SK-N-SH (cell line): ENCODE measurements at regions of chr3 and their contacts with region 1.

Region 1: DNA sequence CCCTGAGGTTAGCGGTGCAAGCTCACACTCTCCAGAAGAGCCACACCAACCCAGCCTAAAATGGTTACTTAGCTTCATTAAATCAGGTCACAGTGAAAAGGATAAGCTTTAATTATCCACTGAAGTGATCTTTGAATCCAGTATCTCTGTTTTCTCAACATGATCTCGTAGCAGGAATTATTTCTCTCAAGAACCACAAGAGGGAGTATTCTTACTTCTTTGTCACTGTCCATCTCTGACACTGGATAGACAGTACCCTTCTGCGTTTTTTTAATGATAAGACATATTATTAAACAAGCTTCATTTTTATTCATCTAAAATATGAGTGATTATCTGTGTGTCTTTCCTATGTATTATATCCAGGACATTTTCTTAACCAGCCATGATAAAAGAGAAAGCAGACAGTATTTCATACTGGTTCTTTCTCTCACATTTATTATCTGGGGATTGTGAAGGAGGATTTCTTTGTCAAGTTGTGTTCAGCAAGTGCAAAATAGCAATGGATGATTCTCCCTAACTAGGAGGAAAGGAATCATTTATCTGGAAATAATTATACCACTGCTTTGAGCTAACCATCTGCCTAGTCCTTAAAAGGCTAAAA is 105.4 kb upstream of the CCDC54 start:
- DNase-seq: peak; percentile 36
- H3K4me3 ChIP-seq: no peak overlapping the region
- H3K27ac ChIP-seq: no peak overlapping the region
- H3K4me1 ChIP-seq: no peaks in the 10 kb centered on the region; a peak in 1 of 4 replicates
- H3K27me3 ChIP-seq: no peaks in the 10 kb centered on the region
- CTCF ChIP-seq: peak; percentile 81
- EP300 ChIP-seq: no peak
- RAD21 ChIP-seq: peak; percentile 86

Region 2: GRCh38 chr3:107150675-107151074 is 121.2 kb before region 1 on chr3:
- CTCF ChIA-PET with region 1: no interaction called
- POLR2A ChIA-PET with region 1: no interaction called
- DNase-seq: no peak
- H3K4me3 ChIP-seq: no peak overlapping the region
- H3K27ac ChIP-seq: no peak overlapping the region
- H3K4me1 ChIP-seq: no peaks in the 10 kb centered on the region
- H3K27me3 ChIP-seq: no peaks in the 10 kb centered on the region
- CTCF ChIP-seq: no peak
- EP300 ChIP-seq: no peak
- RAD21 ChIP-seq: no peak

Region 3: GRCh38 chr3:107241224-107241623 is 30.7 kb before region 1 on chr3:
- CTCF ChIA-PET with region 1: interaction called, 53 read pairs
- POLR2A ChIA-PET with region 1: no interaction called
- DNase-seq: peak; percentile 32
- H3K4me3 ChIP-seq: peak overlapping the region; percentile 94 to 99
- H3K27ac ChIP-seq: peak overlapping the region in 1 of 2 experiments; percentile 60; a peak in 1 of 4 replicates
- H3K4me1 ChIP-seq: peaks cover 0 to 6% of the 10 kb centered on the region in 2 experiments; a peak in 2 of 4 replicates
- H3K27me3 ChIP-seq: no peaks in the 10 kb centered on the region
- CTCF ChIP-seq: no peak; the same call in 1 of the 2 replicates
- EP300 ChIP-seq: no peak
- RAD21 ChIP-seq: no peak

Region 4: DNA sequence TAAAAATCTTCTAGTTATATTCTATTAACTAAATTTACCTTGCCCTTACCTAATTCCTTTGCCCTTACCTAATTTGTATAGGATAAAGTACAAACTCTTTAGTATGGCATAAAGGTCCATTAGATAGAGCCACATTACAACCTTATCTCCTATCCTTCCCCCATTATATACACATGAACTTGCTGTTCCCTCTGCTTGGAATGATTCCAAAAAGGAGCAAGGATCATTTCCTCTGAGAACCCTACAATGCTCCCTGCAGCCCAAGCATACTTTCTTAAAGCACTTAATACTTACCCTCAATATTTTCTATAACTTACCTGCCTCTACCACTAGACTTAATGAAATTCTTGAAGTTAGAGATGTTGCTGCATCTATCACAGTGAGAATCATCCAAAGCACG is 13.6 kb before region 1 on chr3:
- CTCF ChIA-PET with region 1: interaction called, 18 read pairs
- POLR2A ChIA-PET with region 1: interaction called, 5 read pairs
- DNase-seq: no peak
- H3K4me3 ChIP-seq: no peak overlapping the region
- H3K27ac ChIP-seq: no peak overlapping the region
- H3K4me1 ChIP-seq: no peaks in the 10 kb centered on the region
- H3K27me3 ChIP-seq: no peaks in the 10 kb centered on the region
- CTCF ChIP-seq: no peak
- EP300 ChIP-seq: no peak
- RAD21 ChIP-seq: no peak

Region 5: GRCh38 chr3:107323723-107324122 is 51.8 kb after region 1 on chr3:
- CTCF ChIA-PET with region 1: no interaction called
- POLR2A ChIA-PET with region 1: no interaction called
- DNase-seq: no peak
- H3K4me3 ChIP-seq: no peak overlapping the region
- H3K27ac ChIP-seq: no peak overlapping the region
- H3K4me1 ChIP-seq: no peaks in the 10 kb centered on the region
- H3K27me3 ChIP-seq: no peaks in the 10 kb centered on the region
- CTCF ChIP-seq: no peak
- EP300 ChIP-seq: no peak
- RAD21 ChIP-seq: no peak

Region 6: GRCh38 chr3:107404727-107405469 is 133.0 kb after region 1 on chr3:
- CTCF ChIA-PET with region 1: interaction called, 16 read pairs
- POLR2A ChIA-PET with region 1: no interaction called
- DNase-seq: no peak
- H3K4me3 ChIP-seq: no peak overlapping the region; a peak in 1 of 4 replicates
- H3K27ac ChIP-seq: peak overlapping the region; percentile 56 to 82; a peak in 3 of 4 replicates
- H3K4me1 ChIP-seq: peaks cover 0 to 6% of the 10 kb centered on the region in 2 experiments; a peak in 2 of 4 replicates
- H3K27me3 ChIP-seq: no peaks in the 10 kb centered on the region
- CTCF ChIP-seq: no peak
- EP300 ChIP-seq: peak in 1 of 2 experiments; percentile 56; a peak in 1 of 4 replicates
- RAD21 ChIP-seq: no peak

Region 7: DNA sequence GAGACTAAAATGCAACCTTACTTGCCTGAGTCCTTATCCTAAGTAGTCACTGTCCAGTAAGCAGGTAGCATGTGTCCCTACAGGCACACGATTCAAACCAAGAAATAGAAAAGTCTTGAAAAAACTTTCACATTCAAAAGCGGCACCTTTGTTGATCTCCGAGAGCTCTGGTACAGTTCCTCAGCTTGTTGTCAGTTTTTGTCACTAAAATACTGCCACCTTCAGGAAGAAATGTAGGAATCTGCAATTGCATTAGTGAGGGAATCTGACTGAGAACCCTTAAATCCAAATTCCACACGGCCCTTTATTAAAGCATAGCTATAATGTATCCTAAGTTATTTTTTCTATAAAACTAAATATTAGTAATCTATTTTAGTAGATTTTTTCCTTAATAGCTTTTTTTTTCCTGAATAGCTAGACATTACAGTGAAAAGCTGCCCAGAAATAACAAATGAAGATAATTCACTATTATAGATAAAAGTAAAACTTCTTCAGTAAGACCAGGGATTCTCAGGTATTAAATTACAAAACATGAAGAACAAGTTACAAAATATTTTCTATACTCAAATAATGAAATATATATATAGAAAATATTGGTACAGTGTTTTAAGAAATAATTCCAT is 149.4 kb after region 1 on chr3:
- CTCF ChIA-PET with region 1: interaction called, 85 read pairs
- POLR2A ChIA-PET with region 1: no interaction called
- DNase-seq: peak; percentile 50
- H3K4me3 ChIP-seq: peak overlapping the region; percentile 38 to 59
- H3K27ac ChIP-seq: no peak overlapping the region
- H3K4me1 ChIP-seq: peaks cover 0 to 2% of the 10 kb centered on the region in 2 experiments; a peak in 1 of 4 replicates
- H3K27me3 ChIP-seq: no peaks in the 10 kb centered on the region
- CTCF ChIP-seq: peak; percentile 79
- EP300 ChIP-seq: no peak
- RAD21 ChIP-seq: peak; percentile 77

Region 8: GRCh38 chr3:107543666-107544065 is 271.8 kb after region 1 on chr3:
- CTCF ChIA-PET with region 1: interaction called, 14 read pairs
- POLR2A ChIA-PET with region 1: no interaction called
- DNase-seq: no peak
- H3K4me3 ChIP-seq: no peak overlapping the region
- H3K27ac ChIP-seq: no peak overlapping the region
- H3K4me1 ChIP-seq: no peaks in the 10 kb centered on the region
- H3K27me3 ChIP-seq: no peaks in the 10 kb centered on the region
- CTCF ChIP-seq: peak; percentile 54
- EP300 ChIP-seq: no peak
- RAD21 ChIP-seq: peak; percentile 70